HEK293 (cell line): ENCODE measurements at regions of chr6 and their contacts with region 1.

Region 1: DNA sequence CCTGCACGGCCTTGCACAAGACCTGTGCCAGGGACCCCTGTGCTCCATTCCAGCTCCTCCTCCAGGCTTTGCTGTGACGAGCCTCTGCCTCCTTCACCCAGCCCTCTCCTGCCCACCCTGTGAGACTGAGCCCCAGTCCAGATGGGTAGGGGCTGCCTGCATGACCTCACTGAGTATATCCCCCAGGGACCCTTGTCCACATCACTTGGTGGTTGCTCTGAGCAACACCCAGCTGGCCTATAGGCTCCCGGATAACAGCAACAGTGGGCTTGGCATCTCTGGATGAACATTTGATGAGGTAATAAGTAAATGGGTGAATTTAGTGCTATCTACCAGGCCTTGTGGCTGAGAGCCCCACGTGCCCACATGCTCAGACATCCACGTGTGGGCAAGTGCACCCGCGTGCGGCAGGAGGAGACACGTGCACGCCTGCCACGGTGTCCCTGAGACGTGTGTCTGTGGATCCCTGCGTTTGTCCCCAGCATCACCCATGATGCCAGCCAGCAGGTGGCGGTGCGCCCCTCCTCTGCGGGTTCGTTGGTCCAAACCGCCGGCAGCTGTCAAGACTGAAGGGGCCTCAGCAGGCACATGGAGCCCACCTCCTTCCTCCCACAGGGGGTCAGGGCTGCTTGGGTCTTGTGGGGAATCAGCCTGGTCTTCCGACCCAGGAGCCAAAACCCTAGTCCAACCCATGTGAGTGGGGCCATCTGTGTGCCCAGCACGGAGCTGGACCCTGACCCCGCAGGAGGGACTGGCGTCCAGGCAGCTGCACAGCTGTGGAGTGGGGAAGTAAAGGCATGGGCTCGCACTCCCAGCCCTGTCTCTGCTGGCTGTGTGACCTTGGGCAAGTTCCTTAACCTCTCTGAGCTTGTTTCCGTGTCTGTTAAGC is 45.9 kb downstream of the FGD2 start:
- H3K4me3 ChIP-seq: no peak overlapping the region
- H3K27ac ChIP-seq: no peak overlapping the region
- H3K4me1 ChIP-seq: no peaks in the 10 kb centered on the region
- CTCF ChIP-seq: peak; percentile 97

Region 2: GRCh38 chr6:37038292-37039198 is 12.8 kb before region 1 on chr6:
- CTCF ChIA-PET with region 1: interaction called, 380 read pairs
- POLR2A ChIA-PET with region 1: interaction called, 8 read pairs
- H3K4me3 ChIP-seq: no peak overlapping the region
- H3K27ac ChIP-seq: no peak overlapping the region
- H3K4me1 ChIP-seq: no peaks in the 10 kb centered on the region
- CTCF ChIP-seq: no peak

Region 3: GRCh38 chr6:37102279-37103168 is 51.1 kb after region 1 on chr6:
- CTCF ChIA-PET with region 1: interaction called, 14 read pairs
- POLR2A ChIA-PET with region 1: interaction called, 4 read pairs
- H3K4me3 ChIP-seq: peak overlapping the region; percentile 23
- H3K27ac ChIP-seq: peak overlapping the region; percentile 79
- H3K4me1 ChIP-seq: peaks cover 26% of the 10 kb centered on the region
- CTCF ChIP-seq: no peak

Region 4: GRCh38 chr6:37115236-37115895 is 64.0 kb after region 1 on chr6:
- CTCF ChIA-PET with region 1: interaction called, 11 read pairs
- POLR2A ChIA-PET with region 1: interaction called, 3 read pairs
- H3K4me3 ChIP-seq: no peak overlapping the region
- H3K27ac ChIP-seq: no peak overlapping the region
- H3K4me1 ChIP-seq: peaks cover 4% of the 10 kb centered on the region
- CTCF ChIP-seq: no peak

Region 5: GRCh38 chr6:37125783-37126492 is 74.6 kb after region 1 on chr6:
- CTCF ChIA-PET with region 1: interaction called, 12 read pairs
- POLR2A ChIA-PET with region 1: interaction called, 5 read pairs
- H3K4me3 ChIP-seq: peak overlapping the region; percentile 3; the same call in 1 of the 2 replicates
- H3K27ac ChIP-seq: peak overlapping the region; percentile 10; the same call in 1 of the 2 replicates
- H3K4me1 ChIP-seq: peaks cover 14% of the 10 kb centered on the region
- CTCF ChIP-seq: no peak

Region 6: GRCh38 chr6:37137201-37138090 is 86.1 kb after region 1 on chr6:
- CTCF ChIA-PET with region 1: interaction called, 16 read pairs
- POLR2A ChIA-PET with region 1: interaction called, 3 read pairs
- H3K4me3 ChIP-seq: peak overlapping the region; percentile 19
- H3K27ac ChIP-seq: peak overlapping the region; percentile 73
- H3K4me1 ChIP-seq: peaks cover 27% of the 10 kb centered on the region
- CTCF ChIP-seq: no peak

Region 7: DNA sequence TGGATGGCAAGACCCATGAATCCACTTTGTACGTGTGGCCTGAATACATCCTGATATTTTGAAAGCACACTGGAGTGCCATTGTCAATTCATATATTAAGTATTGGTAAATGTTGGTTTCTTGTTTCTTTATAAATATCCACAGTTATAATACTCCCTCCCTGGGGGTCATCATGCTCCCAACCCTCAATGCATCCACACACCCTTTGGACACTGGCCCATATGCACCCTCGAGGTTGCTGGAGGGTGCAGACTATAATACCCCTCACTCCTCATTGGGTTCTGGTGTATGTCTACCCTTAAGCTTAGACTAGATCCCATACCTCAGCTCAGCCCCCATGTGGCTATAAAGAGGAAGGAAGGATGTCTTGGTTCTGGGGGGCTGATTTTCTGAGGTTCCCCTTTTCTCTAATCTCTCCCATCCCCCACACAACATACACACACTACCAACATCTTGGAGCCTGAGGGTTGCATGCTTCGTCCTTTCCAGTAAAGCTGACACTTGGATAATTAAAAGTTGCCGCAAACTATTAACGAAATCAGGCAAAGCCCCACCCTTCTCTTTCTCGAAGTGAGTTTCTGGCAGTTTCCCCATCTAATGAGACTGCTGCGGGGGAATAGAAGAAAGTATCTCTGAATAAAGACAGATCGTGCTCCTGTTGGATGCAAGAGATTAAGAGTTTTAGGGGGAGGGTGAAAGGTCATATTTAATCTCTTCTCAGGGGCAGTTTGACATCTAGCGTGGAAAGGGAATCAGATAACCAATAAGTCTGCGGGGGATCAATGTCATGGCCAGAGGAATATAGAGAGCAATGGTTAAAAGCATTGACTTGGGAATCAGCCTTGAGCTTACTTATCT is 125.9 kb after region 1 on chr6:
- CTCF ChIA-PET with region 1: interaction called, 221 read pairs
- POLR2A ChIA-PET with region 1: interaction called, 51 read pairs
- H3K4me3 ChIP-seq: no peak overlapping the region
- H3K27ac ChIP-seq: no peak overlapping the region
- H3K4me1 ChIP-seq: no peaks in the 10 kb centered on the region
- CTCF ChIP-seq: no peak